ENCODE measurements at regions of chr1 and their contacts with region 1.

Region 1: GRCh38 chr1:156480411-156481192 is 20.0 kb downstream of the MEF2D start:
- DNase-seq: peak; percentile 74 to 88 (median 76)
- H3K4me3 ChIP-seq: peak overlapping the region; percentile 19
- H3K4me3 Mint-ChIP-seq: peak overlapping the region in 6 of 7 donors; percentile 28 to 76 (median 50)
- H3K27ac ChIP-seq: peak overlapping the region; percentile 21
- H3K27ac Mint-ChIP-seq: peak overlapping the region; percentile 40 to 96 (median 92)
- H3K4me1 ChIP-seq: peaks cover 34% of the 10 kb centered on the region
- H3K4me1 Mint-ChIP-seq: peaks cover 43 to 62% (median 55%) of the 10 kb centered on the region in 3 donors
- H3K27me3 ChIP-seq: no peaks in the 10 kb centered on the region
- H3K27me3 Mint-ChIP-seq: no peaks in the 10 kb centered on the region

Region 2: GRCh38 chr1:156456622-156457465 is 23.8 kb before region 1 on chr1:
- CTCF ChIA-PET with region 1: interaction called, 20 read pairs
- POLR2A ChIA-PET with region 1: interaction called, 5 read pairs
- DNase-seq: peak; percentile 93 to 99 (median 96)
- H3K4me3 ChIP-seq: peak overlapping the region; percentile 100
- H3K4me3 Mint-ChIP-seq: peak overlapping the region; percentile 91 to 97 (median 95)
- H3K27ac ChIP-seq: peak overlapping the region; percentile 99
- H3K27ac Mint-ChIP-seq: peak overlapping the region; percentile 98 to 100 (median 99)
- H3K4me1 ChIP-seq: peaks cover 12% of the 10 kb centered on the region
- H3K4me1 Mint-ChIP-seq: peaks cover 12 to 20% (median 17%) of the 10 kb centered on the region in 3 donors
- H3K27me3 ChIP-seq: no peaks in the 10 kb centered on the region
- H3K27me3 Mint-ChIP-seq: peaks cover 0 to 1% of the 10 kb centered on the region in 2 donors

Region 3: GRCh38 chr1:156508163-156508887 is 27.7 kb after region 1 on chr1:
- CTCF ChIA-PET with region 1: interaction called, 177 read pairs
- POLR2A ChIA-PET with region 1: interaction called, 19 read pairs
- DNase-seq: no peak
- H3K4me3 ChIP-seq: no peak overlapping the region
- H3K4me3 Mint-ChIP-seq: peak overlapping the region in 6 of 7 donors; percentile 19 to 85 (median 55)
- H3K27ac ChIP-seq: no peak overlapping the region
- H3K27ac Mint-ChIP-seq: peak overlapping the region in 7 of 8 donors; percentile 70 to 95 (median 89)
- H3K4me1 ChIP-seq: peaks cover 44% of the 10 kb centered on the region
- H3K4me1 Mint-ChIP-seq: peaks cover 48 to 58% (median 50%) of the 10 kb centered on the region in 3 donors
- H3K27me3 ChIP-seq: no peaks in the 10 kb centered on the region
- H3K27me3 Mint-ChIP-seq: peaks cover 0 to 9% of the 10 kb centered on the region in 2 donors

Region 4: GRCh38 chr1:156584813-156585212 is 104.2 kb after region 1 on chr1:
- CTCF ChIA-PET with region 1: interaction called, 23 read pairs
- POLR2A ChIA-PET with region 1: interaction called, 8 read pairs
- DNase-seq: no peak
- H3K4me3 ChIP-seq: no peak overlapping the region
- H3K4me3 Mint-ChIP-seq: peak overlapping the region in 1 of 7 donors; percentile 46
- H3K27ac ChIP-seq: no peak overlapping the region
- H3K27ac Mint-ChIP-seq: no peak overlapping the region
- H3K4me1 ChIP-seq: peaks cover 30% of the 10 kb centered on the region
- H3K4me1 Mint-ChIP-seq: peaks cover 27 to 38% (median 33%) of the 10 kb centered on the region in 3 donors
- H3K27me3 ChIP-seq: no peaks in the 10 kb centered on the region
- H3K27me3 Mint-ChIP-seq: peaks cover 0 to 1% of the 10 kb centered on the region in 2 donors

Region 5: DNA sequence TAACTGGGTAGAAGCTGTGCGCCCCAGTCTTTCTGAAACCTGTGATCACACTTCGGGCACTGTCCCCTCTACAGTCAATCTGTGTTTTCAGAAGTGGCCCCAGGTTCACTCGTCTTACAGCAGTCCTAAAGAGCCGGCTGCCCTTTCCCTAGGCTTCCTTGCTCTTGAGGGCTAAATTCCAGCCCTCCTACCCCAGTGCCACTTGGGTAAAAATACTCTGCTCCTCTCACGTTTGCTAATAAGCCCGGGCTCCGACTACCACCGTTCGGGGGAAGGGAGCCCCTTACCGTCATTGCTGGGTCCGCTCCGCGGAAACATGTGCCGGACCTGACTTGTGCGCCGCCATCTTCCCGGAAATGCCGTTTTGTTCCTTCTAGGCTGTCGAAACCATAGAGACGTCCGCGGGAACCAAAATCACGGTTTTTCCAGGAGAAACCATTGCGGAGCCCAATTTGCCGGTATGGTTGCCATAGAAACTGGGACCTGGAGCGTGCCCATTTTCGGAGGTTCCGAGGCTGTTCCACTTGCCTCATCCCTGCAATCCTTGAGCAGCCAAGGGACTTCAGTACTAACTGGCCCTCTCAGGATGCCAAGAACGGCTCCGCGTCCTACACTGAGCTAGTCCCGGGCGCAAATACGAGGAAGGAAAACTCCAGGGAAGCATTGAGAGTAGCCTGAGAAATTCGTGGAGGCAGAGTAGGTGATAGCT is 120.7 kb after region 1 on chr1 and contains the start of gene GPATCH4:
- CTCF ChIA-PET with region 1: interaction called, 18 read pairs
- POLR2A ChIA-PET with region 1: no interaction called
- DNase-seq: peak; percentile 58 to 81 (median 70)
- H3K4me3 ChIP-seq: peak within 1 kb of the TSS; percentile 97
- H3K4me3 Mint-ChIP-seq: peak within 1 kb of the TSS; percentile 84 to 100 (median 95)
- H3K27ac ChIP-seq: peak within 1 kb of the TSS; percentile 68
- H3K27ac Mint-ChIP-seq: peak within 1 kb of the TSS; percentile 72 to 100 (median 98)
- H3K4me1 ChIP-seq: peaks cover 32% of the 10 kb centered on the region
- H3K4me1 Mint-ChIP-seq: peaks cover 34 to 36% (median 35%) of the 10 kb centered on the region in 3 donors
- H3K27me3 ChIP-seq: no peaks in the 10 kb centered on the region
- H3K27me3 Mint-ChIP-seq: no peaks in the 10 kb centered on the region
- total RNA-seq, gene GPATCH4: 123 to 131 TPM